Mammary epithelial cell (primary cell): ENCODE measurements at regions of chr10 and their contacts with region 1.

Region 1: GRCh38 chr10:27241652-27242472 is 1.3 kb upstream of the ACBD5 start:
- DNase-seq: peak; percentile 95
- H3K4me3 ChIP-seq: peak overlapping the region; percentile 73 to 91 (median 74)
- H3K27ac ChIP-seq: peak overlapping the region; percentile 75
- H3K4me1 ChIP-seq: peaks cover 19% of the 10 kb centered on the region
- H3K27me3 ChIP-seq: no peaks in the 10 kb centered on the region
- CTCF ChIP-seq: peak in 1 of 2 donors; percentile 42

Region 2: DNA sequence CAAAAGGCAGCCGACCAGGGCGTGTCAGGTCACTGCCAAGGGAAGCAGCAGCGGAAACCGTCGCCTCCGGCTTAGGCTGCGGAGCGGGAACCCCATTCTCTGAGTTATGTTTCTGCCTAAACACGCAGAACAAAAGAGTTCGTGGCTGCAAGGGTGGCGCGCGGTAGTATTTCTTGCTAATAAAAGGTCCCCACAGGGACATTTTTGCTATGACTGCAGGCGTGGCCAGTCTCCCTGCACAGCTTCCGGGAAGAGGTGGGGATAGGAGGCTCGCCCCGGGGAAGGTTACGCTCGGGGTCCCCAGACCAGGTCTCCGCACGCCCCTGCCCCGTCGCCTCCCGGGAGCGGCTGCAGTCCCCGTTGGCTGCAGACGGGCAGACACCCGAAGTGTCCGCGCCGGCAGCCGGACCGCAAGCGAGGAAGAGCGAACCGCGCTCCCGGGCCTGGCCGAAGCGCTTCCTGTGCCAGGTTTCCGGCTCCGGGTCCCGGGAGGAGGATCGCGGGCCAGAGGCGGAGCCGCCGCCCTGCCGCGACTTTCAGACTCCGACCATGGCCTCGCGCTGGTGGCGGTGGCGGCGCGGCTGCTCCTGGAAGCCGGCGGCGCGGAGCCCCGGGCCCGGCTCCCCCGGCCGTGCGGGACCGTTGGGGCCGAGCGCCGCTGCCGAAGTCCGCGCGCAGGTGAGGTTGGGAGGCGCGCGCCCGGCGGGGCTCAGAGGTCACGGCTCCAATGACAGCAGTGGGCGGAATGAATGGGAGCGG is 544.5 kb before region 1 on chr10 and contains the start of gene PDSS1:
- CTCF ChIA-PET with region 1: no interaction called
- dilution Hi-C with region 1: no loop called
- in situ Hi-C with region 1: no loop called
- intact Hi-C with region 1: loop called (anchors 10 kb)
- DNase-seq: peak; percentile 72
- H3K4me3 ChIP-seq: peak within 1 kb of the TSS; percentile 71 to 88 (median 76)
- H3K27ac ChIP-seq: peak within 1 kb of the TSS; percentile 47
- H3K4me1 ChIP-seq: peaks cover 5% of the 10 kb centered on the region
- H3K27me3 ChIP-seq: no peaks in the 10 kb centered on the region
- CTCF ChIP-seq: no peak
- total RNA-seq, gene PDSS1: 4.8 to 11.2 TPM

Region 3: DNA sequence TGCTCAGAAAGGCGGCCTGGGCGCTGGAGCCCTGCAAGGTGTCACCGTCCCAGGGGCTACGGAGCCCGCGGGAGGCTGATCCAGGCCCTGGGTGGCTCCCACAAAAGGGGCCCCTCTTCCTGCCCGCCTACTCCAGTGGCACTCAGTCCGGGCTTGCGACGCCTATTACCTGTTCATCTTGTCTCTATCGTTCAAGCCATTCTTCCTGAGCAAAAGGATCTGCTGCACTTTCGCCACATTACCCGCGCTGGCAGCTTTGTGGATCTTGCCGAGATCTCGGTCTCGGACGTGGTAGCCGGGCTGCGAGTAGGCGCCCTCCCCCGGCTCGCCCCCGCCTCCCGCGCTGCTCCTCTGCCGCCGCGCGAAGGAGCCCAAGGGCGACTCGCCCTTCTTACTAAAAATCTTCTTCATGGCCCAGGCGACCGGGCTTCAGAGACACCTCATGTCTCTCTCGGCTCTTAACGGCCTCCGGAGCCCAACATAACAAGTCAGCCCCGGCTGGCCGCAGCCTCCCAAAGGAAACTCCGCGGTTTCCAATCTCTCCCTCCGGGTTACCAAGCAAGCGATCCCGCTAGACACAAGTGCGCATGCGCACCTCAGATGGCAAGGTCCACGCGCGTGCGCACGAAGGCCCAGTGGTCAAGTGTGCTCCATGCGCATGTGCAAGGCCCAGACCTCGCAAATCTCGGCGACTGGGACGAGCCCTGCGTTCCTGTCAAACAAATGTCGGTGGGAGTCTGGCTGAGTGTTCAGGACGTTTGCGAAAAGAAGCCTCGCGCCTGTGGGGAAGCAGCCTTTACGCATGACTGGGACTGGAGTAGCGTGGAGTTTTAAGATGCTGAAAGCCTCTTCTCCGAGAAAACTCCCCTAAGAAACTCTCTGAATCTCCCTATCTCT is 141.7 kb before region 1 on chr10 and contains the start of gene ANKRD26:
- CTCF ChIA-PET with region 1: no interaction called
- dilution Hi-C with region 1: no loop called
- in situ Hi-C with region 1: no loop called
- intact Hi-C with region 1: loop called (anchors 5 kb)
- DNase-seq: peak; percentile 96
- H3K4me3 ChIP-seq: peak within 1 kb of the TSS; percentile 55 to 82 (median 80)
- H3K27ac ChIP-seq: peak within 1 kb of the TSS; percentile 64
- H3K4me1 ChIP-seq: peaks cover 5% of the 10 kb centered on the region
- H3K27me3 ChIP-seq: no peaks in the 10 kb centered on the region
- CTCF ChIP-seq: peak in 1 of 2 donors; percentile 14
- total RNA-seq, gene ANKRD26: 7.0 to 8.1 TPM

Region 4: GRCh38 chr10:27155066-27155754 is 86.7 kb before region 1 on chr10 and contains the start of gene MASTL:
- CTCF ChIA-PET with region 1: no interaction called
- dilution Hi-C with region 1: no loop called
- in situ Hi-C with region 1: no loop called
- intact Hi-C with region 1: loop called (anchors 2 kb)
- DNase-seq: peak; percentile 95
- H3K4me3 ChIP-seq: peak within 1 kb of the TSS; percentile 55 to 98 (median 96)
- H3K27ac ChIP-seq: peak within 1 kb of the TSS; percentile 99
- H3K4me1 ChIP-seq: peaks cover 15% of the 10 kb centered on the region
- H3K27me3 ChIP-seq: no peaks in the 10 kb centered on the region
- CTCF ChIP-seq: no peak
- total RNA-seq, gene MASTL: 6.5 to 15.8 TPM

Region 5: GRCh38 chr10:27223964-27224363 is 17.9 kb before region 1 on chr10:
- CTCF ChIA-PET with region 1: interaction called, 18 read pairs
- dilution Hi-C with region 1: no loop called
- in situ Hi-C with region 1: no loop called
- intact Hi-C with region 1: no loop called
- DNase-seq: peak; percentile 5
- H3K4me3 ChIP-seq: no peak overlapping the region
- H3K27ac ChIP-seq: no peak overlapping the region
- H3K4me1 ChIP-seq: no peaks in the 10 kb centered on the region
- H3K27me3 ChIP-seq: no peaks in the 10 kb centered on the region
- CTCF ChIP-seq: peak; percentile 24 to 53

Region 6: DNA sequence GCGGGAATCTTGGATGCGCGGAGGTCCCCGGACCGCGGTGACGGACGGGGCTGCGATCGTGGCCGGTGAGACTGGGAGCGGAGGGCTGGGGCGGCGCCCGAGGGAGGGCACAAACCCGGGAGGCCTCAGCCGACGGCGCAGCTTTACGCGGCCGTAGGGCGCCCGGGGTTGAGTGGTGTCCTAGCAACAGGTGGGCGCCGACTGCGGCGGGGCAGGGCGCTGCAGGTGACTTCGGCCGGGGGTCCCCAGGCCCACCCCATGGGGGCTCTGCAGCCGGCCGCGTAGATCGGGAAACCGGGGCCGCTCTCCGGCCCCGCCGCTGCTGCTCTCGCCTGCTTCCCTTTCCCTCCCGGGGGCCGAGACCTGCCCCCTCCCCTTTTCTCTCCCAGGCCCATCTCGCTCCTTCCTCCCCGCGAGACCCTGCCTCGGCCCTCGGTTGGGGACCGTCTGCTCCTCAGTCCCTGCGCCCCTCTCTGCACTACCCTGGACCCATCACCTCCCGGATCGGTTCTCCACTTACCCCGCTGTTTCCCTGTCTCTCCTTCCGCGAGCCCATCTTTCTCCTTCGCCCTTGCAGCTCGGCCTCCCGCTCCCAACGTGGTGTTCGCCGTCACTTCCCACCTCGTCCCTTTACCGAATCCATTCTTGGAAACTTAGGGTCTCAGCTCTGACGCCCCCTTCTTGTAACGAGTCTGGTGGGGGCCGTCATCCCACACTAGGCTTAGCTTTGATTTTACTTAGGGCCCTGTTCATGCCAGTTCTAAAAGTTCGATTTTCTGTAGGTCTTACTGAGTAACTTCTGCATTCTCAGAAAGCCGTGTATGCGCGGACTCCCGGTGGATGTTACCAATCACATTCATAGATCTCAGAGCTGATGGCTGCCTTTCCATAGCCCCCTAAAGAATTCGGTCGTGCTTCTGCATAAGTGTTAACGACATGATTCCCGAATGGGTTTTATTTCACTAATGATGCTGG is 17.3 kb after region 1 on chr10:
- CTCF ChIA-PET with region 1: no interaction called
- dilution Hi-C with region 1: no loop called
- in situ Hi-C with region 1: no loop called
- intact Hi-C with region 1: no loop called
- DNase-seq: no peak
- H3K4me3 ChIP-seq: peak overlapping the region in 2 of 3 experiments; percentile 39 to 42
- H3K27ac ChIP-seq: no peak overlapping the region
- H3K4me1 ChIP-seq: peaks cover 7% of the 10 kb centered on the region
- H3K27me3 ChIP-seq: peaks cover 15% of the 10 kb centered on the region
- CTCF ChIP-seq: no peak

Region 7: GRCh38 chr10:27504007-27504807 is 262.3 kb after region 1 on chr10 and contains the start of gene RAB18:
- CTCF ChIA-PET with region 1: no interaction called
- dilution Hi-C with region 1: no loop called
- in situ Hi-C with region 1: no loop called
- intact Hi-C with region 1: loop called (anchors 10 kb)
- DNase-seq: peak; percentile 97
- H3K4me3 ChIP-seq: peak within 1 kb of the TSS; percentile 70 to 96 (median 94)
- H3K27ac ChIP-seq: peak within 1 kb of the TSS; percentile 92
- H3K4me1 ChIP-seq: peaks cover 28% of the 10 kb centered on the region
- H3K27me3 ChIP-seq: no peaks in the 10 kb centered on the region
- CTCF ChIP-seq: peak in 1 of 2 donors; percentile 13
- total RNA-seq, gene RAB18: 75.3 to 164 TPM